SK-N-SH (cell line): ENCODE measurements at regions of chr22 and their contacts with region 1.

Region 1: DNA sequence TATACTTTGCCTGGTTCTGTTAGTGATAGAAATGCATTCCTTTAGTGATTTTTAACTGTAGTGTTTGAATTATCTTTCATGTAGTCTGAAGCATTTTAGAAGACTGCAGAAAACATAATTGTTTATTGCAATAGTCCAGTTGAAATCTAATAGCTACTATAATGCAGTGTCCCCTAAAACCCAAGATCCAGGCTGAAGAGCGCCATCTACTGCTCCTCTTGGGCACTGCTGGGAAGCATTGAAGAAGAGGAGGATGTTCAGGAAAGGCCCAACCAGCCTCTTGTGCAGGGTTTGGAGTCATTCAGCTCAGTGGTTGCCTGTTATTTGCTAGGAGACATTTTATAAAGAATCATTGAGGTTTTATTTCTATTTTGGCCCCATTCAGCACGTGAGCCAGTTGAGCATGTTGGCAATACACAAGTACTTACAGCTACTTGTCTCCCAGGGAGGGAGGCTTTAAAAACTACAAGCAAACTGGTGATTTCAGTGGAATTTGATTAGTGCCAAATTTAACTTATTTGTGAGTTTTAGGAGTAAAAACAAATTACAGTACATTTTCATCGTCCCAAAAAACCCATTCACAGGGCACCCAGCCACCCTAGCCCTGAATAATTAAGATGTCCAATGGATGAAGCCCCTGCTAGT is 74.9 kb upstream of the HORMAD2 start:
- DNase-seq: peak; percentile 63
- H3K4me3 ChIP-seq: no peak overlapping the region
- H3K27ac ChIP-seq: peak overlapping the region in 1 of 2 experiments; percentile 69; a peak in 2 of 4 replicates
- H3K4me1 ChIP-seq: peaks cover 14 to 34% of the 10 kb centered on the region in 2 experiments
- H3K27me3 ChIP-seq: no peaks in the 10 kb centered on the region
- CTCF ChIP-seq: peak; percentile 99
- EP300 ChIP-seq: no peak
- RAD21 ChIP-seq: peak; percentile 91

Region 2: GRCh38 chr22:29679316-29679715 is 326.0 kb before region 1 on chr22:
- CTCF ChIA-PET with region 1: interaction called, 10 read pairs
- POLR2A ChIA-PET with region 1: no interaction called
- DNase-seq: no peak
- H3K4me3 ChIP-seq: no peak overlapping the region
- H3K27ac ChIP-seq: no peak overlapping the region
- H3K4me1 ChIP-seq: no peaks in the 10 kb centered on the region
- H3K27me3 ChIP-seq: no peaks in the 10 kb centered on the region
- CTCF ChIP-seq: no peak
- EP300 ChIP-seq: no peak
- RAD21 ChIP-seq: no peak

Region 3: GRCh38 chr22:29701155-29701999 is 304.0 kb before region 1 on chr22:
- CTCF ChIA-PET with region 1: interaction called, 15 read pairs
- POLR2A ChIA-PET with region 1: no interaction called
- DNase-seq: peak; percentile 64
- H3K4me3 ChIP-seq: no peak overlapping the region
- H3K27ac ChIP-seq: peak overlapping the region in 1 of 2 experiments; percentile 69; a peak in 2 of 4 replicates
- H3K4me1 ChIP-seq: peaks cover 12 to 86% of the 10 kb centered on the region in 2 experiments; a peak in 2 of 4 replicates
- H3K27me3 ChIP-seq: no peaks in the 10 kb centered on the region
- CTCF ChIP-seq: peak; percentile 12; the same call in 1 of the 2 replicates
- EP300 ChIP-seq: peak in 1 of 2 experiments; percentile 25; a peak in 1 of 4 replicates
- RAD21 ChIP-seq: 0 out of 2 replicates have a peak, but pooled peaks have one; percentile 10

Region 4: GRCh38 chr22:29772170-29772641 is 233.1 kb before region 1 on chr22:
- CTCF ChIA-PET with region 1: interaction called, 13 read pairs
- POLR2A ChIA-PET with region 1: no interaction called
- DNase-seq: no peak
- H3K4me3 ChIP-seq: no peak overlapping the region
- H3K27ac ChIP-seq: 0 out of 4 replicates have a peak overlapping the region, but pooled peaks of 1 of the 2 experiments have one; percentile 0
- H3K4me1 ChIP-seq: peaks cover 4 to 8% of the 10 kb centered on the region in 2 experiments; a peak in 2 of 4 replicates
- H3K27me3 ChIP-seq: no peaks in the 10 kb centered on the region
- CTCF ChIP-seq: peak; percentile 70
- EP300 ChIP-seq: no peak
- RAD21 ChIP-seq: peak; percentile 52

Region 5: GRCh38 chr22:29914165-29914564 is 91.2 kb before region 1 on chr22:
- CTCF ChIA-PET with region 1: no interaction called
- POLR2A ChIA-PET with region 1: no interaction called
- DNase-seq: peak; percentile 18
- H3K4me3 ChIP-seq: no peak overlapping the region
- H3K27ac ChIP-seq: peak overlapping the region; percentile 50 to 84; a peak in 3 of 4 replicates
- H3K4me1 ChIP-seq: peaks cover 0 to 33% of the 10 kb centered on the region in 2 experiments
- H3K27me3 ChIP-seq: no peaks in the 10 kb centered on the region
- CTCF ChIP-seq: no peak
- EP300 ChIP-seq: peak in 1 of 2 experiments; percentile 82; a peak in 1 of 4 replicates
- RAD21 ChIP-seq: no peak

Region 6: DNA sequence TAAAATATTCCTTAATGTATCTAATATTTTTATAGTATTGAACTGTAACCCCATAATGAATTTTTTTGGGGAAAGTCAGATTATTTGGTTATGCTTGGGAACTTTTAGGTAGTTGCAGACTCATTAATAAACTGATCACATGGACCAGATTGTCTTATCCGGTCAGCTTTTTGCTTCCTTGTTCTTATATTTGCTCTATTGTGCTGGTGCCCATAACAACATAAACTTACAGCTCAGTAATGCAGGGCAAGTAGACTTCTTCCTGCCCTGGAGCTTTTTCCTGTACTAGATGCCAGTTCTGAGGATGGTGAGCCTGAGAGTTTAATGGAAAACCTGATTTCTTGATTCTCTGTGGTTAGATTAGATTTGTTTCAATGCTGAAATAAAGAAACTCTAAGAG is 69.1 kb before region 1 on chr22:
- CTCF ChIA-PET with region 1: no interaction called
- POLR2A ChIA-PET with region 1: no interaction called
- DNase-seq: no peak
- H3K4me3 ChIP-seq: no peak overlapping the region
- H3K27ac ChIP-seq: no peak overlapping the region
- H3K4me1 ChIP-seq: no peaks in the 10 kb centered on the region
- H3K27me3 ChIP-seq: no peaks in the 10 kb centered on the region
- CTCF ChIP-seq: no peak
- EP300 ChIP-seq: no peak
- RAD21 ChIP-seq: no peak

Region 7: GRCh38 chr22:29947410-29948384 is 57.6 kb before region 1 on chr22:
- CTCF ChIA-PET with region 1: interaction called, 11 read pairs
- POLR2A ChIA-PET with region 1: no interaction called
- DNase-seq: peak; percentile 12
- H3K4me3 ChIP-seq: no peak overlapping the region
- H3K27ac ChIP-seq: peak overlapping the region; percentile 58 to 81; a peak in 3 of 4 replicates
- H3K4me1 ChIP-seq: peaks cover 6 to 32% of the 10 kb centered on the region in 2 experiments
- H3K27me3 ChIP-seq: no peaks in the 10 kb centered on the region
- CTCF ChIP-seq: no peak
- EP300 ChIP-seq: no peak; a peak in 1 of 4 replicates
- RAD21 ChIP-seq: no peak

Region 8: DNA sequence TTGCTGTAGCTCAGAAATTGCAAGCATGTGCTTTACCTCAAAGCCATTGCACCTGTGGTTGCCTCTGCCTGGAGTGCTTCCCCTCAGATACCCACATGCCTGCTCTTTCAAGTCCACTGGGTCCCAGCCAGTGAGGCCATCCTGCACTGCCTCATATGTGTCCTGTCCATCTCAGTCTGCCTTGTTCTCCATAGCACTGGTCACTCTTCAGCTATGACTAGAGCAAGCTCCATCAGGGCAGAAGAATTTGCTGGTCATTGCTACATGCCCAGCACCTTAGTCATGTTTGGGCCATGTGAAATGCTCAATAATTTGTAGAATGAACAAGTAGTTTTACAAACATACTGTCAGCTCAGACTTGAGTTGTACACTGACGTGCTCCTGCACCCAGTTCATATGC is 10.5 kb after region 1 on chr22:
- CTCF ChIA-PET with region 1: interaction called, 54 read pairs
- POLR2A ChIA-PET with region 1: no interaction called
- DNase-seq: no peak
- H3K4me3 ChIP-seq: no peak overlapping the region
- H3K27ac ChIP-seq: peak overlapping the region; percentile 77 to 92; a peak in 3 of 4 replicates
- H3K4me1 ChIP-seq: peaks cover 10 to 21% of the 10 kb centered on the region in 2 experiments
- H3K27me3 ChIP-seq: no peaks in the 10 kb centered on the region
- CTCF ChIP-seq: no peak
- EP300 ChIP-seq: peak in 1 of 2 experiments; percentile 9; a peak in 1 of 4 replicates
- RAD21 ChIP-seq: no peak

Region 9: DNA sequence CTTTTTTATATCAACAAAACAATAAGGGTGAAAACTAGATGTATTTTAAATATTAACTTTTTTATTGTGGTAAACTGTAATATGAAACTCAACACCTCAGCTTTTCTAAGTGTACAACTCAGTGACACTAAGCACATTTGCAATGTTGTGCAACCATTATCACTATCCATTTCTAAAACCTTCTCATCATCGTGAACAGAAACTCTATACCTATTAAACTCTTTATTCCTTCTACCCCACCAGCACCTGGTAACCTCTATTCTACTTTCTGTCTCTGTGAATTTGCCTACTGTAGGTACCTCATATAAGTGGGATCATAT is 84.3 kb after region 1 on chr22:
- CTCF ChIA-PET with region 1: interaction called, 16 read pairs
- POLR2A ChIA-PET with region 1: no interaction called
- DNase-seq: no peak
- H3K4me3 ChIP-seq: no peak overlapping the region
- H3K27ac ChIP-seq: peak overlapping the region in 1 of 2 experiments; percentile 12; a peak in 1 of 4 replicates
- H3K4me1 ChIP-seq: no peaks in the 10 kb centered on the region
- H3K27me3 ChIP-seq: no peaks in the 10 kb centered on the region
- CTCF ChIP-seq: no peak
- EP300 ChIP-seq: no peak
- RAD21 ChIP-seq: no peak